Astrocyte of the cerebellum (primary cell): ENCODE measurements at regions of chr1 and their contacts with region 1.

Region 1: GRCh38 chr1:14894811-14895560 is 258.6 kb upstream of the TMEM51 start:
- DNase-seq: no peak
- H3K4me3 ChIP-seq: no peak overlapping the region
- CTCF ChIP-seq: no peak

Region 2: GRCh38 chr1:14681182-14681581 is 213.8 kb before region 1 on chr1:
- in situ Hi-C with region 1: no loop called
- DNase-seq: no peak
- H3K4me3 ChIP-seq: no peak overlapping the region
- CTCF ChIP-seq: no peak

Region 3: GRCh38 chr1:14826172-14826636 is 68.8 kb before region 1 on chr1:
- in situ Hi-C with region 1: loop called (anchors 10 kb)
- DNase-seq: peak; percentile 59
- H3K4me3 ChIP-seq: no peak overlapping the region
- CTCF ChIP-seq: peak; percentile 11

Region 4: GRCh38 chr1:15089258-15089992 is 194.4 kb after region 1 on chr1:
- in situ Hi-C with region 1: loop called (anchors 5 kb)
- DNase-seq: no peak
- H3K4me3 ChIP-seq: no peak overlapping the region
- CTCF ChIP-seq: no peak